ENCODE measurements at regions of chr6 and their contacts with region 1.

Region 1: DNA sequence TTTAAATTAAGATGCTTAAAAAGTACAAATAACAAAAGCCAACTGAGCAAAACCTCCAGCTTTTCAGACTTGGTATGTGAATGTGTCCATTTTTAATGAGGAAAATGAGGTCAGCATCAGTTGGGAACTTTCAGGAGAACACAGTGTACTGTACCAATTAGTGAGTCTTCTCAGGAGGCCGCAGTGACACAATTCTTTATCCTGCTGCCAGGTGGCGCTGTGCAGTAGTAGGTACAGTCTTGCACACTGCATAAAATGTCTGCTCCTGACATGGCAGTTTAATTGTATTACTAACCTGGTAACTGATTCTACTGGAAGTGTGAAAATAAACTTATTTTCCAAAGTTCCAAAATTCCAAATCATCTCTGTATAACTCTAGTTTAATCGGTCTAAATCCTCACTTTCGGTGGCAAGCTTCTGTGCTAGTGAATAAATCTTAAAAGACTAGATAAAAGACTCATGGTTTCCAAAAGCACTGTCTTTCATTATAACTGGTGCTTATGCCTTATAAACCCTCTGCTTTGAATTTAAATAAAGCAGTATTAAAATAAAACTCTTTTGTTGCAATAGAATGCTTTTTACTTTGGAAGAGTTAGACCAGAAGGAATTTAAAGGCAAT is 214.8 kb upstream of the MMS22L start:
- DNase-seq: peak; percentile 45 to 96 (median 75)

Region 2: DNA sequence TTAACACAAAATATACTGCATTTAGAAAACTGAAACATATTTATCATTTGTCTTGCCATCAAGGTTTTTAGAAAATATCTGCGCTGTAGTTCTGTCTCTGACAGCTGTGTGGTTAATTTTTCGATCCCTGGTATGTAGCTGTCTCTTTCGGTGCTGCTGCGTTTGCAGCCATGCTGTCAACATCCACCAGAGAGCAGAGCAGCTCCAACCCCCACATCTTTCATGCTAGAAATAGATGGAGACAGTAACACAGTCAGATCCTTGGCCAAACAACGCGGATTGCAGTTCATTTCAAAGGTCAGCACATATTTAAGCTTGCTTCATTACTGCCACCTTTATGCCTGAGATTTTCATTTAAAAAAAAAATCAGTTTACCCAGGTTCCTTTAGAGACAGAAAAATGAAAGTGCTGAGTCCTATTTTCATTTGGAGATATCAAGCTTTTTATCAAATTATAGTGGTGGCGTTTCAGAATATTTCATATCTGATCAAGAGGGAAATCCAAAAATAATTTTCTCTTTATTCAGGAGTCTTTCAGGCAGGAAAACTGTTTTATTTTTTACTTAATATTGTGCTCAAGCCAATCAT is 57.1 kb before region 1 on chr6:
- intact Hi-C with region 1: loop called (anchors 5 kb)
- DNase-seq: peak; percentile 47 to 96 (median 72)

Region 3: GRCh38 chr6:98039869-98040607 is 542.2 kb after region 1 on chr6:
- intact Hi-C with region 1: loop called (anchors 10 kb)
- DNase-seq: no peak

Region 4: DNA sequence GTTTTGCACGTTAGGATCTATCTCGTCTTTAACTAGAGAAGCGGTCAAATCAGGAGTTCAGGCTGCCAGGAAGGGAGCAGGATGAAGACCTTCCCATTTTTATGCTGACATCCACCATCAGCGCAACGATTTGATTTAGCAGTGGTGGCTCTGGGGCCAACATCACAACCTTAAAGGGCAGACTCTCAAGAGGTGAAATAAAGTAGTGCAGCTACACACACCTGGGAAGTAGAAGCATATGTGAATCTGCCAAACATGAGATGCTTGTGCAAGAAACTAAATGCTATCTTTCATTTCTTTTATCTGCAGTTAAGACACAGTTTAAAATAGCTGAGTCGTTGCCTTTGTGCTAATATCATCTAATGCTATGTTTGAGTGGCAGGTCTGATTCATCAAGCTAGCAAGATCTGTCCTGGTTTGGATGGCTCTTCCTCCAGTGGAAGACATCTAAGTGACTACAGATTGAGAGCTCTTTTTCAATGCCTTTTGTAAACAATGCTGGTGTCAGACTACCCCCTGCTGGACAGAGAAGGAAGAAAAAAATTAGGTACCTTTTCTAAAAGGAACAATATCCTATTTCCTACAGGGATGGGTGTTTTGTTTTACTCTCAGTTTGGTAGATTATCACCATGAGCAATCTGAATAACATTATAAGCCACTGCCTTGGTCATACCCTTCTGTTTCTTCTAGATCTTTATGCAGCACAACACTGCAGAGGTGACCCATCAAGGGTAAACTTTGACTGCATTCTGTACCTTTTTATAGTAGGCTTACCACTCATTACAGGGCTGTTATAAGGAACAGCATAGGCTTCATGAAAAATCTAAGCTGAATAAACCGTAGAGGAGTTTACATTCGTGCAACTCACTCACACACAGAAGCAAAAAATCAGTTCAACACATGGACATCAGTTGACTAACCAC is 1621.5 kb after region 1 on chr6:
- intact Hi-C with region 1: loop called (anchors 10 kb)
- DNase-seq: peak in 2 of 10 donors; percentile 14 to 27

Measured in posterior cingulate gyrus (tissue), 11 donors.